Activated CD4-positive, alpha-beta memory T cell treated with anti-CD3 and anti-CD28 coated beads for 36 hours (primary cell): ENCODE measurements at regions of chr4 and their contacts with region 1.

Region 1: DNA sequence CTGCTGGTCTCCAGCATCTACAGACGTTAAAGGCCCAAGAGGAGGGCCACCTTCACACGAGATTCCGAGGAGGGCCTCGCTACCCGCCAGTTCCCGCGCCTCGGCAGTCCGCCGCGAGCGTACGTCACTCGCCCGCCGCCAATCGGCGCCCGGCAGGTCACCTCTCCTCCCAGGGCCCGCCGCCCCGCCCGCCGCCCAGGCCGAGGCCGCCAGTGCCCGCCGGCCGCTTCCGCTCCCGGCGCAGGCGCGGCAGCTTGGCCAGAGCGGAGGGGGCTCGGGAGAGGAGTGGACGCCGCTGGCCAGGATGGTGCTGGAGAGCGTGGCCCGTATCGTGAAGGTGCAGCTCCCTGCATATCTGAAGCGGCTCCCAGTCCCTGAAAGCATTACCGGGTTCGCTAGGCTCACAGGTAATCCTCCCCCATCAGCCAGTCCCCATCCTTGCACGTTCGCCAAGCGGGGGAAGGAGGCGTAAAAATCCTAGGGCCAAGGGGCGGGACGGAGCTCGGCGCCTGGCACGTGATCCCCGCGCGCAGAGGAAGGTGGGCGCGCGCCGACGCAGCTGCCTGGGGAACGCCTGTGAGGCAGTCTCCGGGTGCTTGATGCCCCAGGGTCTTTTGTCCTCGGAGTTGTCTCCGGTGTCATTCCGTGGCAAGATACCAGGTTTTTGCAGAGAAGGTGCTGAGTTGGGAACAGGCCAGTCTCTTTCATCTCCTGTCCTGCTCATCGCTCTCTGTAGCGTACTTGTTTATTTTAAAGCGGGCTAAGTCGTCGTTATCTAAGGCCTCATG is at the start of gene CISD2:
- DNase-seq: peak; percentile 95
- H3K4me3 Mint-ChIP-seq: peak within 1 kb of the TSS; percentile 98
- H3K27ac Mint-ChIP-seq: peak within 1 kb of the TSS; percentile 98
- H3K4me1 Mint-ChIP-seq: peaks cover 54% of the 10 kb centered on the region
- H3K27me3 Mint-ChIP-seq: no peaks in the 10 kb centered on the region
- total RNA-seq, gene CISD2: 28.5 to 32.8 TPM

Region 2: GRCh38 chr4:102449751-102450352 is 419.1 kb before region 1 on chr4:
- CTCF ChIA-PET with region 1: no interaction called
- POLR2A ChIA-PET with region 1: no interaction called
- intact Hi-C with region 1: loop called (anchors 2 kb)
- DNase-seq: peak; percentile 61
- H3K4me3 Mint-ChIP-seq: no peak overlapping the region
- H3K27ac Mint-ChIP-seq: peak overlapping the region; percentile 4
- H3K4me1 Mint-ChIP-seq: peaks cover 43% of the 10 kb centered on the region
- H3K27me3 Mint-ChIP-seq: no peaks in the 10 kb centered on the region

Region 3: DNA sequence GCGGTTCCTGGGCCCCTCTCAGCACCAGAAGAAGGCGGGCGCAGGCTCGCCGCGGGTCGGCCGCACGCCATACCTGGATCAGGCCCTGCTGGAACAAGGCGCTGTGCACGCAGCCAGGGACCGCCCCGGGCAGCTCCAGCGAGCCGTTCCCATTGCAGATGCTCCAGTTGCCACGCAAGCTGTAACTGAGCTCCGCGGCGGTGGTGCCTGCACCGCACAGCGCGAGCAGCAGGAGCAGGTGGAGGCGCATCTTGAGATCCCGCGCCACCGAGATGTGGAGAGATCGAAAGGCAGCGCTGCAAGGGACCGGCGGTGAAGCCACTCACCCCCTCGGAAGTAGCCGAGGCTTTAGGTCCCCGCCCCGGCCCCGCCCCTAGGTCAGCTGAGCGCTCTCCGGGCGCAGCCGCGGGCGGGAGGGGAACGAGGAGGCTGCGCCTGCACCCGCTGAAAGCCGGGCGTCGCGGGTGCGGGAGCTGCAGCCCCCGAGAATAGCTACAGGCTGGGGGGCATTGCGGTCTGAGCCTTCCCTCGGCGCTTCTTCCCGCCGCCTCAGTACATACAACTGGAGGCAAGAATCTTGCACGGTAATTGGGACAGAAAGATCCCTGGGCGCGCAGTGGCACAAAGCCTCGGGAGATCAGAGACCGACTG is 108.2 kb before region 1 on chr4 and contains the start of gene MANBA:
- CTCF ChIA-PET with region 1: no interaction called
- POLR2A ChIA-PET with region 1: interaction called, 12 read pairs
- intact Hi-C with region 1: loop called (anchors 1 kb)
- DNase-seq: peak; percentile 91
- H3K4me3 Mint-ChIP-seq: peak within 1 kb of the TSS; percentile 97
- H3K27ac Mint-ChIP-seq: peak within 1 kb of the TSS; percentile 82
- H3K4me1 Mint-ChIP-seq: peaks cover 36% of the 10 kb centered on the region
- H3K27me3 Mint-ChIP-seq: no peaks in the 10 kb centered on the region
- total RNA-seq, gene MANBA: 10.2 to 10.7 TPM

Region 4: GRCh38 chr4:102883278-102883677 is 14.3 kb after region 1 on chr4:
- CTCF ChIA-PET with region 1: interaction called, 6 read pairs
- POLR2A ChIA-PET with region 1: no interaction called
- intact Hi-C with region 1: loop called (anchors 2 kb)
- DNase-seq: no peak
- H3K4me3 Mint-ChIP-seq: no peak overlapping the region
- H3K27ac Mint-ChIP-seq: no peak overlapping the region
- H3K4me1 Mint-ChIP-seq: peaks cover 5% of the 10 kb centered on the region
- H3K27me3 Mint-ChIP-seq: no peaks in the 10 kb centered on the region

Region 5: GRCh38 chr4:102935716-102936115 is 66.7 kb after region 1 on chr4:
- CTCF ChIA-PET with region 1: no interaction called
- POLR2A ChIA-PET with region 1: no interaction called
- intact Hi-C with region 1: no loop called
- DNase-seq: no peak
- H3K4me3 Mint-ChIP-seq: no peak overlapping the region
- H3K27ac Mint-ChIP-seq: no peak overlapping the region
- H3K4me1 Mint-ChIP-seq: no peaks in the 10 kb centered on the region
- H3K27me3 Mint-ChIP-seq: no peaks in the 10 kb centered on the region

Region 6: GRCh38 chr4:103075901-103076739 is 207.1 kb after region 1 on chr4:
- CTCF ChIA-PET with region 1: no interaction called
- POLR2A ChIA-PET with region 1: interaction called, 7 read pairs
- intact Hi-C with region 1: loop called (anchors 2 kb)
- DNase-seq: peak; percentile 72
- H3K4me3 Mint-ChIP-seq: peak overlapping the region; percentile 79
- H3K27ac Mint-ChIP-seq: peak overlapping the region; percentile 99
- H3K4me1 Mint-ChIP-seq: peaks cover 42% of the 10 kb centered on the region
- H3K27me3 Mint-ChIP-seq: no peaks in the 10 kb centered on the region